ENCODE measurements at regions of chr19 and their contacts with region 1.

Region 1: GRCh38 chr19:7629347-7630054 is at the starts of genes PET100 and XAB2:
- DNase-seq: peak; percentile 98
- H3K4me3 ChIP-seq: peak within 1 kb of the TSS; percentile 89 to 96 (median 90)
- H3K27ac ChIP-seq: peak within 1 kb of the TSS; percentile 86
- H3K4me1 ChIP-seq: peaks cover 11% of the 10 kb centered on the region
- H3K27me3 ChIP-seq: no peaks in the 10 kb centered on the region
- CTCF ChIP-seq: no peak
- total RNA-seq, gene PET100: 2.2 to 64.8 TPM
- total RNA-seq, gene XAB2: 31.3 to 31.6 TPM

Region 2: GRCh38 chr19:7349961-7350711 is 279.4 kb before region 1 on chr19:
- CTCF ChIA-PET with region 1: interaction called, 39 read pairs
- dilution Hi-C with region 1: no loop called
- in situ Hi-C with region 1: no loop called
- intact Hi-C with region 1: no loop called
- DNase-seq: no peak
- H3K4me3 ChIP-seq: no peak overlapping the region
- H3K27ac ChIP-seq: no peak overlapping the region
- H3K4me1 ChIP-seq: no peaks in the 10 kb centered on the region
- H3K27me3 ChIP-seq: no peaks in the 10 kb centered on the region
- CTCF ChIP-seq: no peak

Region 3: GRCh38 chr19:7408251-7408650 is 221.2 kb before region 1 on chr19:
- CTCF ChIA-PET with region 1: no interaction called
- dilution Hi-C with region 1: no loop called
- in situ Hi-C with region 1: no loop called
- intact Hi-C with region 1: no loop called
- DNase-seq: no peak
- H3K4me3 ChIP-seq: no peak overlapping the region
- H3K27ac ChIP-seq: no peak overlapping the region
- H3K4me1 ChIP-seq: peaks cover 4% of the 10 kb centered on the region
- H3K27me3 ChIP-seq: no peaks in the 10 kb centered on the region
- CTCF ChIP-seq: no peak

Region 4: DNA sequence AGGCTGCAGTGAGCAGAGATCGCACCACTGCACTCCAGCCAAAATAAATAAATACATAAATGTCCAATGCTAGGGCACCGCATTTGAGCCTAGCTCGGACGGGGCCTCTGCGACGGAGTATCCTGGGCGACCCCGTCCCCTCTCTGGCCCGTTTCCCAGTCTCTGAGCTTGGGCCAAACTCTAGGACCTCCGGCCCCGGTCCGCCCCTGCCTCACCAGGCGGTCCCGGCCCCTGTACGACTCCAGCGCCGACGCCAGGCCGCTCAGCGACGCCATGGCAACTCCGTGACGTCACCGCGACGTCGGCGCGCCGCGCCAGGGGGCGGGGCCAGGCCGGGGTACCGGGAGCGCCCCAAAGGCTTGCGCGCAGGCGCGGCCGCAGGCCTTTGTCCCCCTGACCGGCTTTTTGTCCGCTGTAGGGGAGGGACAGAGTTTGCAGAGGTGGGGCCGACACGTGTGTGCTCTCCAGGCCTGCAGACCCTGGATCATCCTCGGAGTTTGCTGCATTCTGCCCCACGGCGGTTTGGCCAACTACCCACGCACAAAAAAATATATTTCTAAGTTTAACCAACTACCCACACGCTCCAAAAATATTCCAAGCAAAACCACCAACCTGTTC is 140.7 kb before region 1 on chr19 and contains the start of gene PEX11G:
- CTCF ChIA-PET with region 1: no interaction called
- dilution Hi-C with region 1: no loop called
- in situ Hi-C with region 1: no loop called
- intact Hi-C with region 1: no loop called
- DNase-seq: peak; percentile 69
- H3K4me3 ChIP-seq: peak within 1 kb of the TSS; percentile 65 to 83 (median 68)
- H3K27ac ChIP-seq: peak within 1 kb of the TSS; percentile 55
- H3K4me1 ChIP-seq: peaks cover 9% of the 10 kb centered on the region
- H3K27me3 ChIP-seq: no peaks in the 10 kb centered on the region
- CTCF ChIP-seq: no peak
- total RNA-seq, gene PEX11G: 5.7 to 6.8 TPM

Region 5: DNA sequence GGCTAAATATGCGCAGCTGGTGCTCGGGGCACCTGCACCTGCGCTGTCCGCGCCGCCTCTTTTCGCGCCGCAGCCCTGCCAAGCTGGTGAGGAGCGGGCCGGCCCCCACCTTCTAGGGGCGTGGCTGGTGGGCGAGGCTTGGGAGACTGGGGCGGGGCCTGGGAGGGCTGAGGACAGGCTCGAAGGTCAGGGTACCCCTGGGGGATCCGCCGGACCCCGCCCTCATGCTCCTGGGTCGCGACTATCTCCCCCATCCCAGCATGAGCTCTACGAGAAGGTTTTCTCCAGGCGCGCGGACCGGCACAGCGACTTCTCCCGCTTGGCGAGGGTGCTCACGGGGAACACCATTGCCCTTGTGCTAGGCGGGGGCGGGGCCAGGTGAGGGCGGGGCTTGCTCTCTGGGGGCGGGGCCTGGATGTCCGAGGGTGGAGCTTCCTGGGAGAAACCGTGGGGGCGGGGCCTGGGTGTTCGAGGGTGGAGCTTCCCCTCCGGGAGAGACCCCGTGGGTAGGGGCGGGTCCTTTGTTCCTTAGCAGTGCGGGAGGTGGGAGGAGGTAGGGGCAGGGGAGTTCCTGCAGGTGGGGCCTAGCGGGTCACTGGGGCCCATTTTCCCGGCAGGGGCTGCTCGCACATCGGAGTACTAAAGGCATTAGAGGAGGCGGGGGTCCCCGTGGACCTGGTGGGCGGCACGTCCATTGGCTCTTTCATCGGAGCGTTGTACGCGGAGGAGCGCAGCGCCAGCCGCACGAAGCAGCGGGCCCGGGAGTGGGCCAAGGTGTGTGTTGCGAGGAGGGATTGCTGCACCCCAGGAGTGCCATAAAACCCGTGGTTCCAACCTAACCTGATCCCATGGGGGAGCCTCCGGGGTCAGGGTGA is 74.3 kb before region 1 on chr19:
- CTCF ChIA-PET with region 1: no interaction called
- dilution Hi-C with region 1: loop called (anchors 5 kb)
- in situ Hi-C with region 1: no loop called
- intact Hi-C with region 1: loop called (anchors 10 kb)
- DNase-seq: no peak
- H3K4me3 ChIP-seq: no peak overlapping the region
- H3K27ac ChIP-seq: no peak overlapping the region
- H3K4me1 ChIP-seq: no peaks in the 10 kb centered on the region
- H3K27me3 ChIP-seq: no peaks in the 10 kb centered on the region
- CTCF ChIP-seq: no peak

Region 6: GRCh38 chr19:7562646-7563393 is 66.7 kb before region 1 on chr19:
- CTCF ChIA-PET with region 1: no interaction called
- dilution Hi-C with region 1: loop called (anchors 5 kb)
- in situ Hi-C with region 1: no loop called
- intact Hi-C with region 1: loop called (anchors 10 kb)
- DNase-seq: no peak
- H3K4me3 ChIP-seq: no peak overlapping the region
- H3K27ac ChIP-seq: no peak overlapping the region
- H3K4me1 ChIP-seq: no peaks in the 10 kb centered on the region
- H3K27me3 ChIP-seq: no peaks in the 10 kb centered on the region
- CTCF ChIP-seq: no peak

Region 7: DNA sequence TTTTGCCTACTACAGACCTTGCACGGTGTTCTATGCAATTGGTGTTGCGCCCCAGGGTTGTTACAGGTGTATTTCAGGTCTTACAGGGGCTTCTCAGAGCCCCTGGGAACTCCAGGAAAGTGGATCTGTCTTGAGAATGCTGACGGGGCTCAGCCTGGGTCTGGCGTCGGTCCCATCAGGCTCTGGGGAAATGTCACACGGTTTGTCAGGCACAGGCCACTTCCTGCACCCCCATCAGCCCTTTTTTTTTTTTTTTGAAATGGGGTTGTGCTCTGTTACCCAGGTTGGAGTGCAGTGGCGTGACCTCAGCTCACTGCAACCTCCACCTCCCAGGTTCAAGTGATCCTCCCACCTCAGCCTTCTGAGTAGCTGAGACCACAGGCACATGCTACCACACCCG is 89.2 kb after region 1 on chr19:
- CTCF ChIA-PET with region 1: no interaction called
- dilution Hi-C with region 1: loop called (anchors 5 kb)
- in situ Hi-C with region 1: no loop called
- intact Hi-C with region 1: no loop called
- DNase-seq: no peak
- H3K4me3 ChIP-seq: no peak overlapping the region
- H3K27ac ChIP-seq: no peak overlapping the region
- H3K4me1 ChIP-seq: no peaks in the 10 kb centered on the region
- H3K27me3 ChIP-seq: no peaks in the 10 kb centered on the region
- CTCF ChIP-seq: no peak